CD4-positive, alpha-beta memory T cell (primary cell): ENCODE measurements at regions of chr6 and their contacts with region 1.

Region 1: GRCh38 chr6:24927985-24928745 is 7.6 kb downstream of the RIPOR2 start:
- DNase-seq: no peak
- H3K4me3 ChIP-seq: peak overlapping the region; percentile 63 to 67
- H3K4me3 Mint-ChIP-seq: peak overlapping the region; percentile 96 to 100 (median 99)
- H3K27ac ChIP-seq: peak overlapping the region; percentile 53
- H3K27ac Mint-ChIP-seq: peak overlapping the region; percentile 78 to 97 (median 94)
- H3K4me1 ChIP-seq: peaks cover 86% of the 10 kb centered on the region
- H3K4me1 Mint-ChIP-seq: peaks cover 44 to 85% (median 66%) of the 10 kb centered on the region in 4 donors
- H3K27me3 ChIP-seq: no peaks in the 10 kb centered on the region
- H3K27me3 Mint-ChIP-seq: peaks cover 0 to 1% of the 10 kb centered on the region in 2 donors

Region 2: GRCh38 chr6:24630856-24631505 is 297.2 kb before region 1 on chr6:
- CTCF ChIA-PET with region 1: no interaction called
- POLR2A ChIA-PET with region 1: no interaction called
- intact Hi-C with region 1: no loop called
- DNase-seq: no peak
- H3K4me3 ChIP-seq: no peak overlapping the region
- H3K4me3 Mint-ChIP-seq: no peak overlapping the region
- H3K27ac ChIP-seq: no peak overlapping the region
- H3K27ac Mint-ChIP-seq: no peak overlapping the region
- H3K4me1 ChIP-seq: no peaks in the 10 kb centered on the region
- H3K4me1 Mint-ChIP-seq: peaks cover 0 to 2% (median 0%) of the 10 kb centered on the region in 4 donors
- H3K27me3 ChIP-seq: peaks cover 5% of the 10 kb centered on the region
- H3K27me3 Mint-ChIP-seq: peaks cover 7 to 11% of the 10 kb centered on the region in 2 donors

Region 3: GRCh38 chr6:24855395-24856245 is 72.5 kb before region 1 on chr6:
- CTCF ChIA-PET with region 1: interaction called, 44 read pairs
- POLR2A ChIA-PET with region 1: interaction called, 76 read pairs
- intact Hi-C with region 1: no loop called
- DNase-seq: peak; percentile 76 to 82 (median 77)
- H3K4me3 ChIP-seq: no peak overlapping the region
- H3K4me3 Mint-ChIP-seq: peak overlapping the region in 5 of 8 donors; percentile 1 to 87 (median 26)
- H3K27ac ChIP-seq: peak overlapping the region; percentile 61
- H3K27ac Mint-ChIP-seq: peak overlapping the region; percentile 82 to 92 (median 90)
- H3K4me1 ChIP-seq: peaks cover 53% of the 10 kb centered on the region
- H3K4me1 Mint-ChIP-seq: peaks cover 48 to 58% (median 50%) of the 10 kb centered on the region in 4 donors
- H3K27me3 ChIP-seq: no peaks in the 10 kb centered on the region
- H3K27me3 Mint-ChIP-seq: no peaks in the 10 kb centered on the region

Region 4: GRCh38 chr6:25472306-25472705 is 544.1 kb after region 1 on chr6:
- CTCF ChIA-PET with region 1: no interaction called
- POLR2A ChIA-PET with region 1: no interaction called
- intact Hi-C with region 1: no loop called
- DNase-seq: no peak
- H3K4me3 ChIP-seq: no peak overlapping the region
- H3K4me3 Mint-ChIP-seq: no peak overlapping the region
- H3K27ac ChIP-seq: no peak overlapping the region
- H3K27ac Mint-ChIP-seq: no peak overlapping the region
- H3K4me1 ChIP-seq: no peaks in the 10 kb centered on the region
- H3K4me1 Mint-ChIP-seq: no peaks in the 10 kb centered on the region
- H3K27me3 ChIP-seq: no peaks in the 10 kb centered on the region
- H3K27me3 Mint-ChIP-seq: no peaks in the 10 kb centered on the region